GM13977 (cell line): ENCODE measurements at regions of chr7 and their contacts with region 1.

Region 1: GRCh38 chr7:145036604-145037405 is 201.0 kb upstream of the TPK1 start:
- DNase-seq: peak; percentile 18
- CTCF ChIP-seq: peak; percentile 69

Region 2: DNA sequence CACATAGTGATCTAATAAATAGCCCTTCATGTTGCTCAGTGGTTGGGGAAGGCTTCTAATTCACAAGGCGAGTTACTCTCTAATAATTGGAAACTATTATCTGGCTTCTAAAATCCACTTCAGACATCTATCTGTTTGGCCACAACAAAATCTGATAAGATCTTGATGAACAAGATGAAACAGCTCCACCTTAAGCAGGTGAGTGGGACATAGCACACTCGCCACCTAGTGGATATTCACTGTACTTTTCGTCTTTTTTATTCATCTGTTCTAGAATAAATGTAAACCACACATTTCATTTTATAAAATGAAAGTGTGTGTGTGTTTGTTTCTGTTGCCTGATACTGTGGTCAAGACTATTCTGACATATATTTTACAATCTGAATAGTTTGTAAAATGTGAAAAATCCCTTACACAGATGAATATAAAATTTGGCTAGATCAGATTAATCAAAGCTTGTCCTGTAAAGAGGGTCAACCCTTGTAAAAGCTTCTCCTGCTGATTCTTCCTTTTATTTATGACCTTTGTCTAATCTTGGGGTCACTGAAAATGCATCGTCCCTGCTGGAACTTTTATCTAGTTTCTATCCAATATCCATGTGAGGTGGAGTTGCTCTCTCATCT is 1053.3 kb after region 1 on chr7:
- in situ Hi-C with region 1: loop called (anchors 25 kb)
- DNase-seq: peak; percentile 44
- CTCF ChIP-seq: peak; percentile 71